Naive thymus-derived CD4-positive, alpha-beta T cell (primary cell): ENCODE measurements at regions of chr2 and their contacts with region 1.

Region 1: GRCh38 chr2:197838036-197838435 is 33.6 kb downstream of the PLCL1 start:
- DNase-seq: peak in 7 of 9 donors; percentile 41 to 71 (median 59)
- ATAC-seq: peak; percentile 88
- H3K4me3 ChIP-seq: peak overlapping the region; percentile 31
- H3K4me3 Mint-ChIP-seq: peak overlapping the region; percentile 65 to 84 (median 80)
- H3K27ac ChIP-seq: peak overlapping the region; percentile 75
- H3K27ac Mint-ChIP-seq: peak overlapping the region; percentile 79 to 98 (median 94)
- H3K4me1 ChIP-seq: peaks cover 0 to 55% of the 10 kb centered on the region in 2 donors
- H3K4me1 Mint-ChIP-seq: peaks cover 28 to 88% (median 67%) of the 10 kb centered on the region in 7 donors
- H3K27me3 ChIP-seq: no peaks in the 10 kb centered on the region
- H3K27me3 Mint-ChIP-seq: no peaks in the 10 kb centered on the region

Region 2: DNA sequence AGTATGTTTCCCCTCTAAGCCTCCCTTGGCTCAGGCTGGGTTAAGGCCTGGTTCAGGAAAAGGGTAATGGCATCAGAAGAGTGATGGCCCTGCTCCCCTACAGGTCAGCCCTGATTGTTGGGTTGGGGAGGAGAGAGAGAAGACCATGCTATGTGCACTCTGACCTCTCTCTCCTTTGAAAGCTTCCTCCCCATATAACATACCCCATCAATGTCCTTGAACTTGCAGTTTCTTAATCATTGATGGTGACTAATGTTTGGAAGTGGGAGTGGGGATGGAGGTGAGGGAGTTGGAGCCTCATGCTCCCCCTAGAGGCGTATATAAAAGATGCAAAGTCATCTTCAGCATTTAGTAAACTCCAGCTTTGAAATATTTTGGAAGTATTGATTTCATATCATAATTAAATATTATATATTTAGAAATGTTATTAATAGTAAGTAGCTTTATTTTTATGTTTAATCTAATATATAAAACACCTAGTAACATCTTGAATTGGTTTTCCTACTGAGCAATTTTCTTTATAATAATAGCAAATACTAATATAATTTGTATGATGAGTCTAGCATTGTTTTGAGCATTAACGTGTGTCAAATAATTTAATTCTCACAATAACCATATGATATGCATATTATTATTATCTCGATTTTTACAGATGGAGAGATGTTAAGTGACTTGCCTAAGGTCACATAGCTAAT is 24.8 kb before region 1 on chr2:
- CTCF ChIA-PET with region 1: interaction called, 13 read pairs
- POLR2A ChIA-PET with region 1: interaction called, 6 read pairs
- intact Hi-C with region 1: no loop called
- DNase-seq: no peak
- ATAC-seq: peak; percentile 58
- H3K4me3 ChIP-seq: no peak overlapping the region
- H3K4me3 Mint-ChIP-seq: no peak overlapping the region
- H3K27ac ChIP-seq: no peak overlapping the region
- H3K27ac Mint-ChIP-seq: peak overlapping the region in 1 of 9 donors; percentile 51
- H3K4me1 ChIP-seq: peaks cover 0 to 40% of the 10 kb centered on the region in 2 donors
- H3K4me1 Mint-ChIP-seq: peaks cover 17 to 86% (median 76%) of the 10 kb centered on the region in 7 donors
- H3K27me3 ChIP-seq: no peaks in the 10 kb centered on the region
- H3K27me3 Mint-ChIP-seq: no peaks in the 10 kb centered on the region